AG04449 (cell line): ENCODE measurements at regions of chr7 and their contacts with region 1.

Region 1: GRCh38 chr7:4883374-4884144 is at the start of gene RADIL:
- DNase-seq: peak; percentile 16
- H3K4me3 ChIP-seq: peak within 1 kb of the TSS; percentile 54
- CTCF ChIP-seq: peak; percentile 93

Region 2: GRCh38 chr7:4797858-4798705 is 85.5 kb before region 1 on chr7:
- CTCF ChIA-PET with region 1: interaction called, 34 read pairs
- POLR2A ChIA-PET with region 1: no interaction called
- DNase-seq: no peak
- H3K4me3 ChIP-seq: no peak overlapping the region
- CTCF ChIP-seq: peak; percentile 99

Region 3: GRCh38 chr7:4861673-4862072 is 21.9 kb before region 1 on chr7 and contains the start of gene PAPOLB:
- CTCF ChIA-PET with region 1: interaction called, 16 read pairs
- POLR2A ChIA-PET with region 1: no interaction called
- DNase-seq: no peak
- H3K4me3 ChIP-seq: peak within 1 kb of the TSS; percentile 49
- CTCF ChIP-seq: no peak